Panc1 (cell line): ENCODE measurements at regions of chr3 and their contacts with region 1.

Region 1: DNA sequence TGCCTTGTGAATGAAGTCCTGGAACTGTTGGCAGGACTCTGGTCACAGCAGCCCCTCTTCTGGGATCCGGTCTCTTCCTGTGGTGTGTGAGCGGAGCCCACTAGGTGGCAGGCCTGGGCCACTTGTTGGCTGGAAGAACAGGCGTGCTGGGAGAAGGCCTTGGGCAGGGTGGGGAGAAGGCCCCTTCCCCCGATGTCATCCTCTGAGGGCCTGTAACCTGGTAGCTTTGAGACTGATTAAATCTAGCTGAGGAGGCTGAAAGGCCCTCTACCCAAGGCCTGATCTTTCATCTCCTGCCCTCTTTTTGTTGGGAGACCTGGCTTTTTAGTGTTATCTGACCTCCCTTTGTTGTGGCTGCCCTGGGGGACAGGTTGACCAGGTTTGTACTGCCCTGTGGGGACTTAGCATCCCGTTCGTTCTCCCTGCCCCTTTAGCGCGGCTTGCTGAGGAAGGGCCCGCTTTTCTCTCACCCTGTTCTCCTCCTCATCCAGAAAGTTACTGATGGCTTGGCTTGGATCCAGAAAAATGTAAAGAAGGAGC is 48.3 kb downstream of the CHCHD6 start:
- DNase-seq: peak; percentile 36
- ATAC-seq: peak; percentile 97
- H3K4me3 ChIP-seq: no peak overlapping the region
- H3K27ac ChIP-seq: peak overlapping the region; percentile 74
- H3K4me1 ChIP-seq: peaks cover 13% of the 10 kb centered on the region
- H3K27me3 ChIP-seq: no peaks in the 10 kb centered on the region
- CTCF ChIP-seq: peak; percentile 95

Region 2: DNA sequence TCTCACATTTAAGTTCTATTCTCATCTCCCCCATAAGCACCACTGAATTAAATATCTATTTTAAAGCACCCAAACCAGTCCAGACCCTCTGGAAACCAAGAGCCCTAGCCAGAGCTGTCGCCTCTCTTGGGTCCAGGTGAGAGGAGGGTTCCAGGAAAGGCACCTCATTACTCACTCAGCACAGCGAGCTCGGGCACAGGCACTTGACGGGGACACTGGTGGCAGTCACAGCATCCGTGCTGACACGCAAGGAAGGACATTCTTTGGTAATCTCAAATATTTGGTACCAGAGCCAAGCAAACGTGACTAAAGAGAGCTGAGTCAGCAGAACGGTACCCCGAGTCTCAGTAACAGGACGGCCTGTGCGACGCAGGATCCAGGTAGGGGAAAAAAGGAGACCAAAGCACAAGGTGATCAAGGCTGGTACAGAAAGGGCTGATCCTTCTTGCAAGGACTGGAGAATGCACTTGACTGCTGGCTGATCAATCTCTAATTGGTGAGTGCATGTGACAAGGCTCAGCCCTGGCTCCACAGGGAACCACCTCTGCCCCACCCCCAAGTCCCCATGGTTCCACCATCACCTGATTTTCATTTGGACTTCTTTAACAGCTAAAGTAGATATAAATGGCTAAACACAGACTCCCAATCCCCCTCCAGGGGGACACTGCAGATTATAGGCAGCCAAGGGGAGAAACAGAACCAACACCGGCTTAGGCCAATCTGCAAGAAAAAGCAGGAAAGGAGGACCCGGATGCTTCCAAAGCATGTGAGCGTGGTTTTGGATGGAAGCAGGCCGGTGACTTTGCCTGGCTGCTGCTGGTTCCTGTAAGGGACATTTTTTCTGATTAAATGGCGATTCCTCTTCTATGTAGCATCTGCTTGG is 13.1 kb after region 1 on chr3:
- CTCF ChIA-PET with region 1: no interaction called
- POLR2A ChIA-PET with region 1: no interaction called
- in situ Hi-C with region 1: no loop called
- intact Hi-C with region 1: no loop called
- DNase-seq: no peak
- ATAC-seq: no peak
- H3K4me3 ChIP-seq: no peak overlapping the region
- H3K27ac ChIP-seq: no peak overlapping the region
- H3K4me1 ChIP-seq: no peaks in the 10 kb centered on the region
- H3K27me3 ChIP-seq: no peaks in the 10 kb centered on the region
- CTCF ChIP-seq: no peak

Region 3: DNA sequence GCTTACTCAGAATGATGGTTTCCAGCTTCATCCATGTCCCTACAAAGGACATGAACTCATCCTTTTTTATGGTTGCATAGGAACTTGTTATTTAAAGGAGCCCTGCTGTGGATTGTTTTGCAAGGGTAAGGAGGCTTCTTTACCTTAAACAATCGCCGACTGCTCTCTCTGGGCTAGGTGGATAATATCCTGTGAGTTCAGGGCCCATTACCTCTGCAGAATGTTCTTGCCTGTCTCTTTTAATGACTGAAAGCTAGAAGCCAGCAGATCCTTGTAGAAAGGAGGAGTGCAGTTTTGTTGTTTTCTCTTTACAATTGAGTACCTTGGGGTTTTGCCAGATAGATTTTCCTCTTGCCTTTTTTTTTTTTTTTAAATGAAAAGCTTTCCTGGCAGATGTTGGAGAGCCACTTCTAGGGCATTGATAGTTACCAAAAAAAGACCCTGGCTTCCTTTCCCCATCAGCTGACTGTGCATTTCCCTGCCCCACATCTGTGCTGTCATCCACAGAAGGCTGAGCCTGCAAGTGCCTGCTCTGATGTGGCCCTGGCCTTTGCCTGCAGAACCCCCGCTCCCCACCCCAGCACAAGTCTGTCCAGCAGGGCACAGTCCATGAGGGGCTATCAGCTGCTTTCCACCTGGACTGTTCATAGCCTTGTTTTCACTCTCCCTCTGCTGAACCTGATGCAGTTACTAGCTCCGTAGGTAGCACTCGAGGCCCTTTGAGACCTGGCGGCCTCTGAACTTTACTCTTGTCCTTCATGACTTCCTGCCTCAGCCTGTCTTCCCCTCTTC is 64.8 kb after region 1 on chr3:
- CTCF ChIA-PET with region 1: no interaction called
- POLR2A ChIA-PET with region 1: interaction called, 13 read pairs
- in situ Hi-C with region 1: no loop called
- intact Hi-C with region 1: no loop called
- DNase-seq: no peak
- ATAC-seq: 0 out of 2 replicates have a peak, but pooled peaks have one; percentile 37
- H3K4me3 ChIP-seq: no peak overlapping the region
- H3K27ac ChIP-seq: no peak overlapping the region
- H3K4me1 ChIP-seq: peaks cover under 1% of the 10 kb centered on the region; the same call in 1 of the 2 replicates
- H3K27me3 ChIP-seq: no peaks in the 10 kb centered on the region
- CTCF ChIP-seq: no peak

Region 4: DNA sequence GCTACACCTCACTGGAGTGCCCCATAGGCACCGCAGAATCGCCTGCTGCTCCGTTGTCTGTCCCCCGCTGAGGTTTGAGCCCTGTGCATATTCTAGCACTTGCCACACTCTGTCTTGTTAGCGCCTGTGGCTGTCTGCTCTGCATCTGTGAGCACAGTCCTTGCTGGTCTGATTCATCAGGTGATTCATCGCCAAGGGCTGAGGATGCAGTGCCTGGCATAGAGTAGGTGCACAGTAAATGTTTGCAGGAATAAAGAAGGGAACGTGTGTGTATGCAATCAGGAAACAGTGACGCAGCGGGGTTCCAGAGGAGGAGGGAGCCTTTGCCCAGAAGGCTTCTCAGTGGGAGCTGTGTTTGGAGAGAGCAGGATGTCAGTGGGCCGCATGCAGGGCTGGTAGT is 106.5 kb after region 1 on chr3:
- CTCF ChIA-PET with region 1: no interaction called
- POLR2A ChIA-PET with region 1: interaction called, 3 read pairs
- in situ Hi-C with region 1: no loop called
- intact Hi-C with region 1: loop called (anchors 10 kb)
- DNase-seq: peak; percentile 73
- ATAC-seq: peak; percentile 98
- H3K4me3 ChIP-seq: no peak overlapping the region
- H3K27ac ChIP-seq: peak overlapping the region; percentile 80
- H3K4me1 ChIP-seq: peaks cover 23% of the 10 kb centered on the region
- H3K27me3 ChIP-seq: no peaks in the 10 kb centered on the region
- CTCF ChIP-seq: no peak

Region 5: DNA sequence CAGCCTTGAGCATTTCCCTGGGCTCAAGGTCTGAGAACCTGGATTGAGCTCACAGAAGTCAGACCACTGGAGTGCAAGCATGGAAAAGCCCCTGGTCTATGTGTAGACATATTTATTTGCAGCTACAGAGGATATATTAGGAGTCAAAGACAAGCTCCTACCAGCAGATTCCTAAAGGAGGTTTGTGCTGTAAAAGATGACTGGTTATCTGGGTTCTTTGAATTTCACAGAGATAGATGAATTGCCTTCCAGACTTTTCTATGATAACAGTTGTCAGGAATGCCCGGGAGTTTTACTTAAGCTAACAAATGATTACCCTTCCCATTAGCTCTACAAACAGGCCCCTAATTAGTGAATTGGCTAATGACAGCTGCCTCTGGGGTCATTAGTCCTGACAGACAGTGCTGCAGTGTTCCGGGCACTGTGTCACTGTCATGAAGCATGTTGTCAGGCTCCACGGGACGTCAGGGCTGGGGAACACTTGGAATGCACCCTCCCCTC is 181.7 kb after region 1 on chr3:
- CTCF ChIA-PET with region 1: no interaction called
- POLR2A ChIA-PET with region 1: interaction called, 11 read pairs
- in situ Hi-C with region 1: no loop called
- intact Hi-C with region 1: no loop called
- DNase-seq: no peak
- ATAC-seq: no peak
- H3K4me3 ChIP-seq: no peak overlapping the region
- H3K27ac ChIP-seq: no peak overlapping the region
- H3K4me1 ChIP-seq: peaks cover 26% of the 10 kb centered on the region
- H3K27me3 ChIP-seq: no peaks in the 10 kb centered on the region
- CTCF ChIP-seq: no peak

Region 6: GRCh38 chr3:126982471-126983175 is 230.2 kb after region 1 on chr3 and contains the start of gene PLXNA1:
- CTCF ChIA-PET with region 1: interaction called, 3 read pairs
- POLR2A ChIA-PET with region 1: no interaction called
- in situ Hi-C with region 1: no loop called
- intact Hi-C with region 1: loop called (anchors 5 kb)
- DNase-seq: peak; percentile 41
- ATAC-seq: peak; percentile 88
- H3K4me3 ChIP-seq: peak within 1 kb of the TSS; percentile 64 to 75
- H3K27ac ChIP-seq: peak within 1 kb of the TSS; percentile 86
- H3K4me1 ChIP-seq: peaks cover 41% of the 10 kb centered on the region
- H3K27me3 ChIP-seq: no peaks in the 10 kb centered on the region
- CTCF ChIP-seq: peak; percentile 99
- total RNA-seq, gene PLXNA1: 80.6 TPM

Region 7: DNA sequence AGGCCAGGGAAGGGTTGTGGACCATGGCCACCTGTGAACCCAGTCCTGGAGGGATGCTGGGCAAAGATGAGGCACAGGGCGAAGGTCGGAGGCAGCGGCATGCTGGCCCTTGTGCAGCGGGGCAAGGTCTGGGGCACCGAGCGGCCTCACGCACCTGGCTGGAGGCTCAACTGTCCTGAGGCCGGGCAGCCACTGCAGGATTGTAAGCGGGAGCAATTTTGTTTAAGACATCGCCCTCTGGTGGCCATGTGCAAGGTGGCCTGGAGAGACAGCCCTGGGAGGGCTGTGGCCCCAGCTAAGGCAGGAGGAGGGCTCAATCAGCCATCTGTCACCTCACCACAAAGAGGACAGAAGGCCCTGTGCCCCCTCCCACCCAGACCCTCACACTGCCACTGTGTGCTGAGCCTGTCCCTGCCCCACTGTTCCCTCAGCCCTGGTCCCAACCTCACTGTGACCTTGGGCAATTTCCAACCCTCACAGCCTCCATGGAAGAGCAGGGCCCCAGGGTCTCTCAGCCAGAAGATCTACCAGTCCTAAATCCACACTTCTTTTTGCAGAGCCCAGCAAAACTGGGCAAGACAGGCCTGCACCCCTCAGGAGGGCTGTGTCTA is 791.9 kb after region 1 on chr3:
- CTCF ChIA-PET with region 1: no interaction called
- POLR2A ChIA-PET with region 1: no interaction called
- in situ Hi-C with region 1: no loop called
- intact Hi-C with region 1: loop called (anchors 10 kb)
- DNase-seq: peak; percentile 41
- ATAC-seq: peak; percentile 88
- H3K4me3 ChIP-seq: no peak overlapping the region
- H3K27ac ChIP-seq: no peak overlapping the region
- H3K4me1 ChIP-seq: peaks cover 4% of the 10 kb centered on the region; the same call in 1 of the 2 replicates
- H3K27me3 ChIP-seq: no peaks in the 10 kb centered on the region; the same call in 1 of the 2 replicates
- CTCF ChIP-seq: peak; percentile 94